ENCODE measurements at regions of chr2 and their contacts with region 1.

Region 1: GRCh38 chr2:106193977-106194778 is at the start of gene UXS1:
- DNase-seq: peak; percentile 99
- H3K4me3 ChIP-seq: peak within 1 kb of the TSS; percentile 76 to 95 (median 85)
- H3K27ac ChIP-seq: peak within 1 kb of the TSS; percentile 80 to 91 (median 86)
- H3K4me1 ChIP-seq: peaks cover 0 to 42% (median 30%) of the 10 kb centered on the region in 4 donors
- H3K27me3 ChIP-seq: no peaks in the 10 kb centered on the region
- CTCF ChIP-seq: no peak
- EP300 ChIP-seq: peak in 1 of 4 donors; percentile 24
- POLR2A ChIP-seq: peak; percentile 35 to 61
- total RNA-seq, gene UXS1: 15.5 to 59.8 (median 32.9) TPM

Region 2: GRCh38 chr2:106115250-106115649 is 78.9 kb before region 1 on chr2:
- intact Hi-C with region 1: loop called (anchors 10 kb)
- DNase-seq: no peak
- H3K4me3 ChIP-seq: no peak overlapping the region
- H3K27ac ChIP-seq: no peak overlapping the region
- H3K4me1 ChIP-seq: peaks cover 0 to 7% (median 6%) of the 10 kb centered on the region in 4 donors
- H3K27me3 ChIP-seq: no peaks in the 10 kb centered on the region
- CTCF ChIP-seq: no peak
- EP300 ChIP-seq: no peak
- POLR2A ChIP-seq: no peak

Region 3: DNA sequence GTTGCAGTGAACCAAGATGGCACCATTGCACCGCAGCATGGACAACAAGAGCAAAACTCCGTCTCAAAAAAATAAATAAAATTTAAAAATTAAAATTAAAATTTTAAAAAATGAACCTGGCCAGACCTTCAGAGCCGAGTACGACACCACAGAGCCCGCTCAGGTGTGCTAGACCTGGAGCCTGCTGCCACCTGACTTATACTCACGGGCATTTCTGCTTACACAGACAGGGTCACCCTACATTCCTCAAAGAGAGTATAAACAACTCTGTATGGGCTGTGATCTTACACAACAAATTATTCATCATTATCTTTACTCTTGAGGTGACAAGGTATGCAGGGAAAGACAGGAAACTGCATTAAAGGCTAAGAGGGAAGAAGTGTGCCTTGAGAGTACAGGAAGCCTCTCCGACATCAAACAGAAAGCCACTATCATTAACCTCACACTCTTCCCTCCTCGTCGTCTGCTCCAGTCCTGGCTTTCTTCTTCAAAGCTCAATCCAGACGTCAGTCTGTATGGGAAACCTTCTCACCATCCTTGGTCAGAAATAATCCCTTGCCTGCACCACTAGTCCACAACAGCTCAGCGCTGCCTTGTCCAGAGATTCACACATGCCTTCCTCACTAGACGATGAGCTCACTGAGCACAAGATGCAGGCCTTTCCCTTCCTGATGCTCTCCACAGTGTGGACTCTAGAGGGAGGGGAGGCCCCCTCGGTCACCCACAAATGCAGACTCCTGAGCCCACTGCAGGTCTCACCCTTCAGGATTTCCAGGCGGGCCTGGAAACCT is 56.3 kb before region 1 on chr2:
- intact Hi-C with region 1: loop called (anchors 5 kb)
- DNase-seq: no peak
- H3K4me3 ChIP-seq: peak overlapping the region in 3 of 4 donors; percentile 13 to 25 (median 21)
- H3K27ac ChIP-seq: peak overlapping the region; percentile 70 to 88 (median 76)
- H3K4me1 ChIP-seq: peaks cover 0 to 31% (median 24%) of the 10 kb centered on the region in 4 donors
- H3K27me3 ChIP-seq: no peaks in the 10 kb centered on the region
- CTCF ChIP-seq: peak in 1 of 4 experiments; percentile 18
- EP300 ChIP-seq: no peak
- POLR2A ChIP-seq: no peak

Region 4: DNA sequence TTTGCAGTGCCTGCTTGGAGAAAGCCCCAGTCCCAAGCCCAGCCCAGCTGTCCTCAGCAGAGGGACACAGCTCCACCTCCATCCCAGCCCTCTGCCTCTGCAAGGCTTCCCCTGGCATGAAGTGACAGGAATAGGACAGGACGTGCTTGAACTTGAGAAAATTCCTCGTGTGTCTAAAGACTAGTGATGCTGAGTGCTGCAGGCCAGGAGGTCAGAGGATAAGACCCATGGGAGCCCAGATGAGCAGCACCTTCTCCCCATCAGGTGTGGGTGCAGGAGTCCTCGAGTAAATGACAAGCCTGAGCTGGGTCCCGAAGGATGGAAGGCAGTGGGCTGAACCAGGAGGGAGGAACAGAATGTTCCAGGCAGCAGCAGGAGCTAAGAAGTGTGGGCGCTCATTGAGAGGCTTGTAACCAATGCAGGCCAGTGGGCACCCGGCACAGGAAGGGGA is 67.7 kb after region 1 on chr2:
- intact Hi-C with region 1: no loop called
- DNase-seq: no peak
- H3K4me3 ChIP-seq: no peak overlapping the region
- H3K27ac ChIP-seq: no peak overlapping the region
- H3K4me1 ChIP-seq: no peaks in the 10 kb centered on the region
- H3K27me3 ChIP-seq: no peaks in the 10 kb centered on the region
- CTCF ChIP-seq: no peak
- EP300 ChIP-seq: no peak
- POLR2A ChIP-seq: no peak

Region 5: DNA sequence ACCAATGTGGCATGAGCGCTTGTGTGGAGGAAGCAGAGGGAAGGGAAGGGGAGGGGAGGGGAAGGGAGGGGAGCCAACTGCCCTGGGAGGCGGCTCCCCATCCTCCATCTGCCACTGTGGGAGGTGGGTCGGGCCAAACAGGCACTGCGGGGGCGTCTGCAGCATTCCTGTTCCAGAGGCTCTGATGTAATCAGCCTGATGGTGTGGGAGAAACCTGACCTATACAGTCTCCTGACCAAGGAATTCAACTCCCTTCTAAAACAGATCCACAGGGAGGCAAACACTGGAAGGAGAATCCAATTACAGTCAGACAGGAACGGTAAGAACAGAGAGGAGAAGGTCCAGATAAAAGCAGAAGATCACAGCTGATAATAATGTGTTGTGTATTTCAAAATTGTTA is 381.8 kb after region 1 on chr2:
- intact Hi-C with region 1: loop called (anchors 5 kb)
- DNase-seq: no peak
- H3K4me3 ChIP-seq: no peak overlapping the region
- H3K27ac ChIP-seq: peak overlapping the region in 1 of 4 donors; percentile 10
- H3K4me1 ChIP-seq: peaks cover 0 to 12% (median 0%) of the 10 kb centered on the region in 4 donors
- H3K27me3 ChIP-seq: no peaks in the 10 kb centered on the region
- CTCF ChIP-seq: no peak
- EP300 ChIP-seq: no peak
- POLR2A ChIP-seq: no peak